Activated CD4-positive, alpha-beta T cell treated with anti-CD3 and anti-CD28 coated beads for 36 hours (primary cell): ENCODE measurements at regions of chr2 and their contacts with region 1.

Region 1: DNA sequence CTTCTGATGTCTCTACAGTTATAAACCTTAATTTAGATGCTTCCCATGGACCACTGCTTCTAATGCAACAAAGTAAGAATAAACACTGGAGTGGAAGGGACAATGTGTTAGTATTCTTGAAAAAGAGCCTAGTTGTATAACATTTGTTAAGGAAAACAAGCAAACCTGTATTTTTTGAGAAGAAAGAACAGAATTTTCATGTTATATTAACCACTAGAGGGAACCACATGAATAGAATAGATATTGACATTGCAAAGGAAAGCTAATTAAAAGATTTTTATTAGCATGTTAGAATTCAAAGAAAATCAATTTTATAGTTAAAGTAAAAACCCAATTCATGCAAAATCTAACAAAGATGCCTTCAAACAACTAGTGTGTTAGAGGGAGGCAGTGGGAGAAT is 151.2 kb upstream of the BARD1 start:
- DNase-seq: no peak
- ATAC-seq: no peak
- H3K4me3 Mint-ChIP-seq: no peak overlapping the region
- H3K27ac Mint-ChIP-seq: no peak overlapping the region
- H3K4me1 Mint-ChIP-seq: no peaks in the 10 kb centered on the region
- H3K27me3 Mint-ChIP-seq: peaks cover 7% of the 10 kb centered on the region

Region 2: GRCh38 chr2:214503568-214503967 is 457.1 kb before region 1 on chr2:
- CTCF ChIA-PET with region 1: no interaction called
- POLR2A ChIA-PET with region 1: no interaction called
- intact Hi-C with region 1: no loop called
- DNase-seq: no peak
- ATAC-seq: no peak
- H3K4me3 Mint-ChIP-seq: no peak overlapping the region
- H3K27ac Mint-ChIP-seq: no peak overlapping the region
- H3K4me1 Mint-ChIP-seq: no peaks in the 10 kb centered on the region
- H3K27me3 Mint-ChIP-seq: peaks cover 2% of the 10 kb centered on the region

Region 3: DNA sequence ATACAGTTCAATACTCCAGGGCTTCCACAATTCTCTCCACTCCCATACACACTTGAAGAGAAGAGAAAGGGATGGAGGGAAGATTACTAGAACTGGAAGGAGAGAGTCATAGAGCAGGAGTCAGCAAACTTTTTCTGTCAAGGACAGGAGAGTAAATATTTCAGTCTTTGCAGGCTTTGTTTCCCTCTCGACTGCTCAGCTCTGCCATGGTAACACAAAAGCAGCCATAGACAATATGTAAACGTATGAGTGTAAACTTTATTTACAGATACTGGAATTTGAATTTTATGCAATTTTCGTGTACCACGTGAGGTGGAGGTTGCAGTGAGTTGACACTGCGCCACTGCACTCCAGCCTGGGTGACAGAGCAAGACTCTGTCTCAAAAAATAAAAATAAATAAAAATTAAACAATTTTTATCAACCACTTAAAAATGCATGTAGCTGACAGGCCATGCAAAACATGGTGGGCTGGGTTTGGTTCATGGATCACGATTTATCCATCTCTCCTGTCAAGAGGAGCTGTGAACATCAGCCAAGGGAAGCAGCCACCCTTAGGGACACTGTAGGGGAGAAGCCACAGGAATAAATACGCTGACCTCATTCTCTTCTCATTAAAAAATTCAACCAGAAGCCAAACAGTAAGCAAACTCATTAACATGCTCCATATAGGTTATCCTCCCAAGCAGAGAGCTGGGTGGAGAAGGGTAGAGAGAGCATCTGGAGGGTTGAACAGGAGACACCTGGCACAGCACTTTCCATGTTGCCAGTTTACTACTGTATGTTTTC is 741.6 kb after region 1 on chr2:
- CTCF ChIA-PET with region 1: no interaction called
- POLR2A ChIA-PET with region 1: no interaction called
- intact Hi-C with region 1: loop called in 1 of 2 experiments (anchors 5 kb)
- DNase-seq: no peak
- ATAC-seq: no peak
- H3K4me3 Mint-ChIP-seq: no peak overlapping the region
- H3K27ac Mint-ChIP-seq: no peak overlapping the region
- H3K4me1 Mint-ChIP-seq: no peaks in the 10 kb centered on the region
- H3K27me3 Mint-ChIP-seq: no peaks in the 10 kb centered on the region

Region 4: DNA sequence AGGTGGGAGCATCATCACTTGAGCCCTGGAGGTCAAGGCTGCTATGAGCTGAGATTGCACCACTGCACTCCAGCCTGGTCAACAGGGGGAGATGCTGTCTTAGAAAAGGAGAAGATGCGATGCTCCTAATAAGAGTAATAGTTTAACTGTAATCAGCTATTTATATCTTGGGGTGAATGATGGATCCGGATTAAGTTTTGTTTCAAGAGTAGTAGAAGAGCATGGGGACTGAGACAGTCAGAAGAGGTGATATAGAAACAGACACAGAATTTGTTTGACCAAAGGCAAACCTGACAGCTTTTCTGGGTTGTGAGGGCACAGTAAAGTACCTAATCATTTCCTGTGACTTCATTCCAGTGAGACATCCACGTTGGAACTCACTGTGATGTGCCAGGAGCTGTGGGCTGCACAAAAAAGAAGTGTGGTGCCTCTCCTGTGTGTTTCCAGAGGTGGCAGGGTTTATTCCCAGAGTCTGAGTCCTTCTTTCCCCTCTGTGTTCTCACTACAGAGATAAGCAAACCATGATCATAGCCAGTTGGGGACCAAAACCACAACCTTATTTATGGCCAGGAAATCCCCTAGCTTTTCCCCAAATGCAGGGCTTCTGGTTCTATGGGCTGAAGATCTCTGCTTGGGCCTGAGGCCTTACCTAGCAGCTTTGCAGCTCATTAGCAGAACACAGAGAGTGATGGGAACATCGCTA is 1262.1 kb after region 1 on chr2:
- CTCF ChIA-PET with region 1: no interaction called
- POLR2A ChIA-PET with region 1: no interaction called
- intact Hi-C with region 1: no loop called
- DNase-seq: peak; percentile 49
- ATAC-seq: peak; percentile 70
- H3K4me3 Mint-ChIP-seq: peak overlapping the region; percentile 5
- H3K27ac Mint-ChIP-seq: peak overlapping the region; percentile 83
- H3K4me1 Mint-ChIP-seq: peaks cover 33% of the 10 kb centered on the region
- H3K27me3 Mint-ChIP-seq: no peaks in the 10 kb centered on the region